Left cardiac atrium (tissue), 4 donors: ENCODE measurements at regions of chr14 and their contacts with region 1.

Region 1: DNA sequence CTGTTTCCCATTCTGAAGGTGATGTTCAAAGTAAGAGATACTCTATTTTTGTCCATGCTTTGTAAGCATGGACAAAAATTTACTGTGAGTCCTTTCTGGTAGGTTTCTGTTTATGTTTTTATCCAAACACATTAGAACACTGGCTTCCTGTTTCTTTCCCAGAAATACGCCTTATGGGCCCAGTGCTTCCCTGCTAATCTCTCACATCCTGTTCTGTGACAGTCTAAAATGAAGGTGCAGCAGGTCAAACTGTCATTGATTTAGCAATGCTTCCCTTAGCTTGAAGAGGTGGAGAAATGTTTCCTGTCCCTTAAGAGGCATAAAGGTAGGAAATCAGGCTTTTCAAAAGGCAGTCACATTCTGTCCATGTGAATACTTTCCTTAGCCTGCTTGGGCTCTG is 305.6 kb downstream of the RPS29 start:
- DNase-seq: no peak
- ATAC-seq: no peak

Region 2: GRCh38 chr14:47722929-47723696 is 1557.5 kb before region 1 on chr14:
- intact Hi-C with region 1: loop called in 1 of 2 experiments (anchors 10 kb)
- DNase-seq: no peak
- ATAC-seq: no peak

Region 3: GRCh38 chr14:49314737-49315136 is 34.2 kb after region 1 on chr14:
- intact Hi-C with region 1: no loop called
- DNase-seq: no peak
- ATAC-seq: no peak